PC-3 (cell line): ENCODE measurements at regions of chr16 and their contacts with region 1.

Region 1: DNA sequence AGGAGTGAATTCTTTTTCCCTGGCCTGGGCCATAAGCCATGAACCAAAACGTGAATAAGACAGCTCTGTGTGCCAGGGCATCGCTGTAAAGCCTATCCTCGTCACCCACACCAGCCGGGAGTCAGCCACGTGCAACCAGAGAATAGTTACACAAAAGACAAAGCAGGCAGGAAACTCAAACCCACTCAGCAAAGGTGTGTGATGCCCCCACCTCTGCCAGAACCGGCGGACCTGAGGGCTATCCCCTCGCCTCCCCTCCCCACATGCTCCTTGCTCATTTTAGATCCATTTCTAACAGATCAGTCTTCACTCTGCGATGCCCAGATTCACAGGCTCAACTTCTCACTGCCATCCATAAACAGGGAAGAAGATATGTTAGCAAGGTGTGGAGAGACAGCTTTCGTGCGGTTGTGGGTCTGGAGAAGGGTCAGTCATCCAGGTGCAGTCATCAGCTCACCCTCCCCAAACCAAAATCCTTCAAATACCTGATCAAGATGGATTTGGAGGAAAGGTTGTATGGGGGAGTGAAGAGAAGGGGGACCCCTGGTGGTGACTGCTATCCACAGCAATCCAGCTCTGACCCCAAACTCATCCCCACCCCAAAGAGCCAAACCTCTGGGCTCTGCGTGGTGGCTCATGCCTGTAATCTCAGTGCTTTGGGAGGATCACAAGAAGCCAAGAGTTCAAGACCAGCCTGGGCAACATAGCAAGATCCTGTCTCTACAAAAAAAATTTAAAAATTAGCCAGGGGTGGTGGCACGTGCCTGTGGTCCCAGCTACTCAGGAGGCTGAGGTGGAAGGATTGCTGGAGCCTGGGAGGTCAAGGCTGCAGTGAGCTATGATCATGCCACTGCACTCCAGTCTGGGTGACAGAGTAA is 219.2 kb downstream of the C16orf78 start:
- DNase-seq: peak; percentile 17
- ATAC-seq: peak; percentile 40; the same call in 1 of the 2 replicates
- H3K4me3 ChIP-seq: no peak overlapping the region
- H3K27ac ChIP-seq: no peak overlapping the region
- H3K4me1 ChIP-seq: no peaks in the 10 kb centered on the region
- H3K27me3 ChIP-seq: peaks cover 29% of the 10 kb centered on the region; the same call in 1 of the 2 replicates
- CTCF ChIP-seq: peak; percentile 62

Region 2: DNA sequence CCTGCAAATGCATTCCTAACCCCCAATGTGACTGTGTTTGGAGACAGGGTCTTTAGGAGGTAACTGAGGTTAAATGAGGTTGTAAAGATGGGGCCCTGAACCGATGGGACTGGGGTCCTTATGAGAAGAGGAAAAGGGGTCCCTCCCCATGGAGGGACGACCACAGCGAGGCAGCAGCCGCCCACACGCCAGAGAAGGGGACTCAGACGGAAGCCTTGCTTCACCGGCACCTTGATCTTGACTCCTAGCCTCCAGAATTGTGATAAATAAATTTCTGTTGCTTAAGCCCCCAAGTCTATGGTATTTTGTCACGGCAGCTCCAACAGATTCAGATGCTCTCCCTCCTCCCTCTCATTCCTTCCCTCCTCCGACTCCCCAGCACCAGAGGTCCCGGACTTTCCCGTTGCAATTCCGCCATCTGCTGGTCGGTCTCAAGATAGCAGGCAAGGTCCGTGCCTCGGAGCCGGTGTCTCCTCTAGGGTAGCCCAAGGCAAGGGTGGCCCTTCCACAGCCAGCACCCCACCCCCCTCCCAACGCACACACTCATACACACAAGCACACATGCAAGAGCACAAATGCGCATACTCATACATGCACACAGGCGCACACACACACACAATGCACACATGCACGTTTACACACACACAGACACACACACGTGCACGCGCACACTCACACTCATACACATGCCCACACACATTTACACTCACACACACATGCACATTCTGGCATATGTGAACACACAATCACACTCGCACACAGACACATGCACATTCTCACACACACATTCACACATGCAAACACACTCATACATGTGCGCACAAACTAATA is 242.3 kb before region 1 on chr16:
- CTCF ChIA-PET with region 1: no interaction called
- POLR2A ChIA-PET with region 1: no interaction called
- intact Hi-C with region 1: no loop called
- DNase-seq: peak; percentile 67
- ATAC-seq: peak; percentile 65
- H3K4me3 ChIP-seq: no peak overlapping the region
- H3K27ac ChIP-seq: no peak overlapping the region
- H3K4me1 ChIP-seq: no peaks in the 10 kb centered on the region
- H3K27me3 ChIP-seq: no peaks in the 10 kb centered on the region
- CTCF ChIP-seq: peak; percentile 79

Region 3: GRCh38 chr16:49407873-49408550 is 184.8 kb before region 1 on chr16:
- CTCF ChIA-PET with region 1: no interaction called
- POLR2A ChIA-PET with region 1: no interaction called
- intact Hi-C with region 1: loop called (anchors 2 kb)
- DNase-seq: peak; percentile 76
- ATAC-seq: peak; percentile 87
- H3K4me3 ChIP-seq: no peak overlapping the region
- H3K27ac ChIP-seq: no peak overlapping the region
- H3K4me1 ChIP-seq: no peaks in the 10 kb centered on the region
- H3K27me3 ChIP-seq: no peaks in the 10 kb centered on the region
- CTCF ChIP-seq: peak; percentile 78

Region 4: GRCh38 chr16:49452578-49452977 is 140.2 kb before region 1 on chr16:
- CTCF ChIA-PET with region 1: no interaction called
- POLR2A ChIA-PET with region 1: no interaction called
- intact Hi-C with region 1: no loop called
- DNase-seq: no peak
- ATAC-seq: no peak
- H3K4me3 ChIP-seq: no peak overlapping the region
- H3K27ac ChIP-seq: no peak overlapping the region
- H3K4me1 ChIP-seq: no peaks in the 10 kb centered on the region
- H3K27me3 ChIP-seq: 0 out of 2 replicates have a peak, but pooled peaks cover 5% of the 10 kb centered on the region
- CTCF ChIP-seq: no peak

Region 5: DNA sequence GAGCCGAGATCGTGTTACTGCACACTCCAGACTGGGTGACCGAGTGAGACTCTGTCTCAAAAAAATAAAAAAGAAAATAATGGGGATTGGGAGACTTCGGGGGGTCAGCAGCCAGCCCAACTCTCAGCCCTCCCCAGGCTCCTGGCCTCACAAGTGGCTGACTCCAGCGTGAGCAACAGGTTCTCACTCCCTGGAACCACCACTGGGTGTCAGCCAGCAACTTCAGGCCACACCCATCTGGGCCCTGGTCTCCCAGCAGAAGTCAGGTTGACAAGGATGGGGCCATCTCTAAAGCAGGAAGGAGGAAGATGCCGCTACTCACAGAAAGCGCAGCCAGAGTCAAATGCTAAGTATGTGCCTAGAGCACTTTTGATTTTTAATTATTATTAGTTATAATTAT is 79.7 kb before region 1 on chr16:
- CTCF ChIA-PET with region 1: no interaction called
- POLR2A ChIA-PET with region 1: no interaction called
- intact Hi-C with region 1: no loop called
- DNase-seq: no peak
- ATAC-seq: no peak
- H3K4me3 ChIP-seq: no peak overlapping the region
- H3K27ac ChIP-seq: no peak overlapping the region
- H3K4me1 ChIP-seq: no peaks in the 10 kb centered on the region
- H3K27me3 ChIP-seq: no peaks in the 10 kb centered on the region; the same call in 1 of the 2 replicates
- CTCF ChIP-seq: no peak

Region 6: GRCh38 chr16:49527611-49528010 is 65.2 kb before region 1 on chr16:
- CTCF ChIA-PET with region 1: no interaction called
- POLR2A ChIA-PET with region 1: no interaction called
- intact Hi-C with region 1: no loop called
- DNase-seq: no peak
- ATAC-seq: no peak
- H3K4me3 ChIP-seq: no peak overlapping the region
- H3K27ac ChIP-seq: no peak overlapping the region
- H3K4me1 ChIP-seq: no peaks in the 10 kb centered on the region
- H3K27me3 ChIP-seq: peaks cover 4% of the 10 kb centered on the region; the same call in 1 of the 2 replicates
- CTCF ChIP-seq: no peak